ENCODE measurements at regions of chr19 and their contacts with region 1.

Region 1: GRCh38 chr19:40662921-40663694 is 27.3 kb downstream of the NUMBL start:
- DNase-seq: peak; percentile 69
- ATAC-seq: peak; percentile 74
- H3K4me3 ChIP-seq: peak overlapping the region; percentile 48 to 65
- H3K27ac ChIP-seq: peak overlapping the region; percentile 81
- H3K4me1 ChIP-seq: peaks cover 30 to 54% of the 10 kb centered on the region in 2 experiments
- H3K27me3 ChIP-seq: no peaks in the 10 kb centered on the region
- CTCF ChIP-seq: peak in 2 of 3 experiments; percentile 86 to 94; a peak in 5 of 6 replicates
- POLR2A ChIP-seq: no peak
- RAD21 ChIP-seq: peak; percentile 99

Region 2: GRCh38 chr19:40622773-40623075 is 40.4 kb before region 1 on chr19:
- CTCF ChIA-PET with region 1: no interaction called
- POLR2A ChIA-PET with region 1: no interaction called
- RAD21 ChIA-PET with region 1: no interaction called
- intact Hi-C with region 1: no loop called
- DNase-seq: no peak
- ATAC-seq: no peak
- H3K4me3 ChIP-seq: no peak overlapping the region
- H3K27ac ChIP-seq: peak overlapping the region; percentile 55
- H3K4me1 ChIP-seq: peaks cover 14 to 20% of the 10 kb centered on the region in 2 experiments
- H3K27me3 ChIP-seq: no peaks in the 10 kb centered on the region
- CTCF ChIP-seq: no peak
- POLR2A ChIP-seq: no peak
- RAD21 ChIP-seq: no peak

Region 3: GRCh38 chr19:40633207-40633606 is 29.9 kb before region 1 on chr19:
- CTCF ChIA-PET with region 1: interaction called, 10 read pairs
- POLR2A ChIA-PET with region 1: no interaction called
- RAD21 ChIA-PET with region 1: no interaction called
- intact Hi-C with region 1: no loop called
- DNase-seq: no peak
- ATAC-seq: no peak
- H3K4me3 ChIP-seq: no peak overlapping the region
- H3K27ac ChIP-seq: no peak overlapping the region
- H3K4me1 ChIP-seq: peaks cover 2 to 26% of the 10 kb centered on the region in 2 experiments; a peak in 2 of 4 replicates
- H3K27me3 ChIP-seq: no peaks in the 10 kb centered on the region
- CTCF ChIP-seq: no peak
- POLR2A ChIP-seq: no peak
- RAD21 ChIP-seq: no peak

Region 4: DNA sequence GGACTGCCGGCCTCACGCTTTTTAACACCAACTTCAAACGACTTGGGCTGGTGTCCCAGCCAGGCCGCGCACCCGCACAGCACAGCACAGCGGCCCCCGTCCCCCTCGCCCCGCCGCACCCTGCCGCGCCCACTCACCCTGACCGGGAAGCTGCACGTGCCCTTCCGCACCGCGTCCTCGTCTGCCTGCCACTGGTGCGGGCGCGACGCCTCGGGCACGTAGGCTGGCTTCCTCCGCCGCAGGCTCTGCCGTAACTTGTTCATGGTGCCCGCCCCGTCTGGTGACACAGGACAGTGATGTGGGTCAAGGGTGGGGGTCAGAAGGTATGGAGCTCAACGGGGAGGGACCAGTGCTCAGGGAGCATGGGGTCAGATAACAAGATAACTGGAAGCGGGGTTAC is 21.2 kb after region 1 on chr19:
- CTCF ChIA-PET with region 1: no interaction called
- POLR2A ChIA-PET with region 1: no interaction called
- RAD21 ChIA-PET with region 1: no interaction called
- intact Hi-C with region 1: no loop called
- DNase-seq: no peak
- ATAC-seq: no peak
- H3K4me3 ChIP-seq: no peak overlapping the region
- H3K27ac ChIP-seq: no peak overlapping the region
- H3K4me1 ChIP-seq: peaks cover 0 to 4% of the 10 kb centered on the region in 2 experiments; a peak in 1 of 4 replicates
- H3K27me3 ChIP-seq: no peaks in the 10 kb centered on the region
- CTCF ChIP-seq: no peak
- POLR2A ChIP-seq: no peak
- RAD21 ChIP-seq: no peak

Region 5: DNA sequence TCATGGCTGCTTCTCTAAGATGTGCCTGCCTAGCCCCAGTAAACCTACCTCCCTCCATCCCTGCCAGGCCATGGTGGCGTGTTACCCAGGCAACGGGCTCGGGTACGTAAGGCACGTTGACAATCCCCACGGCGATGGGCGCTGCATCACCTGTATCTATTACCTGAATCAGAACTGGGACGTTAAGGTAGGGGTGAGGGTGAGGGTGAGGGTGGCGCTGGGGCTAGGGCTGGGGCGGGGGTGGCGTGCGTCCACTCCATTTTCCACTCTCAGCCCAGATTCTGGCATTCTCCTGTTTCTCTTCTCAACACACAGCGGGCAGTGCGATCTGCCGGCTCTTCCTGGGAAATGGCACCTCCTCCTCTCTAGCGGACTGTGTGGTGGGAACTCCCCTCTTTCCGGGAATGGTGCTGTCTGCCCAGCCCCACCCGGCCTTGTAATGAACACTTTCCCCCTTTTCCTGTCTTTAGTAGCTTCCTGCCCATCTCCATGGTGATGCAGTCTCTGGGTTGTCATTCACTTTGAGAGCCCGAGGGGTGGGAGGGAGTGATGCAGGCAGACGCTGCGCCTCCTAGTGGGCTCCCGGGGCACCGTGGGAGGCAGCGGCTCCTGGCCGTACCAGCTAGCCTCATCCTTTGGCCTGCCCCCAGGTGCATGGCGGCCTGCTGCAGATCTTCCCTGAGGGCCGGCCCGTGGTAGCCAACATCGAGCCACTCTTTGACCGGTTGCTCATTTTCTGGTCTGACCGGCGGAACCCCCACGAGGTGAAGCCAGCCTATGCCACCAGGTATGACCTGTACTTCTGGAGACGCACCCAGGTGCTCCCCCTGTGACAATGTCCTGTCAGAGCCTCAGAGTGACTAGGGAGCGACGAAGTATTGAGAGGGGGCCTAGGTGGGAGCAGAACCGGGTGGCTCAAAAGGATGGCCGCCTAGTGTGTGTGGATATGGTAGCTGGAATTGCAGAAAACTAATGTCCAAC is 143.7 kb after region 1 on chr19:
- CTCF ChIA-PET with region 1: interaction called, 23 read pairs
- POLR2A ChIA-PET with region 1: no interaction called
- RAD21 ChIA-PET with region 1: interaction called in 1 of 2 experiments, 4 read pairs
- intact Hi-C with region 1: loop called (anchors 2 kb)
- DNase-seq: peak; percentile 57
- ATAC-seq: peak; percentile 69
- H3K4me3 ChIP-seq: no peak overlapping the region
- H3K27ac ChIP-seq: peak overlapping the region; percentile 19; the same call in 1 of the 2 replicates
- H3K4me1 ChIP-seq: peaks cover 22 to 68% of the 10 kb centered on the region in 2 experiments
- H3K27me3 ChIP-seq: no peaks in the 10 kb centered on the region
- CTCF ChIP-seq: peak; percentile 72 to 93 (median 90); a peak in 5 of 6 replicates
- POLR2A ChIP-seq: no peak
- RAD21 ChIP-seq: peak; percentile 61

Region 6: GRCh38 chr19:41144403-41144802 is 481.3 kb after region 1 on chr19:
- CTCF ChIA-PET with region 1: interaction called, 14 read pairs
- POLR2A ChIA-PET with region 1: no interaction called
- RAD21 ChIA-PET with region 1: interaction called in 1 of 2 experiments, 3 read pairs
- intact Hi-C with region 1: loop called (anchors 2 kb)
- DNase-seq: peak; percentile 82
- ATAC-seq: peak; percentile 98
- H3K4me3 ChIP-seq: no peak overlapping the region
- H3K27ac ChIP-seq: no peak overlapping the region
- H3K4me1 ChIP-seq: peaks cover 0 to 4% of the 10 kb centered on the region in 2 experiments; a peak in 1 of 4 replicates
- H3K27me3 ChIP-seq: no peaks in the 10 kb centered on the region
- CTCF ChIP-seq: peak; percentile 82 to 86 (median 84)
- POLR2A ChIP-seq: no peak
- RAD21 ChIP-seq: peak; percentile 96

Region 7: DNA sequence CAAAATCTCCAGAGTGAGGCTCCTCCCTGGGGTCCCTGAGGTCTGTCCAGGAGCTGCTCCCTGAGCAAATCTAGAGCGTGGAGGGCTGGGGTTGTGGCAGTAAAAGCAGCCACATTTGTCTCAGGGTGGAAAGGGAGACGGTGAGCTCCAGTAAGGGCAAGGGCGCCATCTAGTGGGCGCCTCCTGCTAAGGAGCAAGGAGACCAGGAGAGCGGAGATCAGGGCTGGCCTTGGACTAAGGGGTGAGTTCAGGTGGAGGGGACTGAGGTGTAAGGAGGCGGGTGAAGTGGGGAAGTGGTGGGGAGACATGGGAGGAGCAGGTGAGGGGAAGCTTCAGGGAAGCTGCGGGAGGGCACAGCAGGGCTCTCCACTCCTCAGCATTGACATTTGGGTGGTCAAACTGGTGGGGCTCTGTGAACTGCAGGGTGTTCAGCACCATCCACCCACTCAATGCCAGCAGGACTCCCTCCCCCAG is 907.6 kb after region 1 on chr19:
- CTCF ChIA-PET with region 1: no interaction called
- POLR2A ChIA-PET with region 1: no interaction called
- RAD21 ChIA-PET with region 1: no interaction called
- intact Hi-C with region 1: loop called (anchors 10 kb)
- DNase-seq: peak; percentile 59
- ATAC-seq: peak; percentile 99
- H3K4me3 ChIP-seq: no peak overlapping the region
- H3K27ac ChIP-seq: no peak overlapping the region
- H3K4me1 ChIP-seq: peaks cover 3 to 10% of the 10 kb centered on the region in 2 experiments; a peak in 3 of 4 replicates
- H3K27me3 ChIP-seq: peaks cover 60% of the 10 kb centered on the region
- CTCF ChIP-seq: peak; percentile 86 to 95 (median 91); a peak in 5 of 6 replicates
- POLR2A ChIP-seq: no peak
- RAD21 ChIP-seq: peak; percentile 85